Activated T-helper 2 cell treated with anti-CD3 and anti-CD28 coated beads, Interferon-gamma antibody, Interleukin-2, Interleukin-4, amounts not matched to agents 10 μg/mL and 5 μg/mL and 100 μg/mL, durations not matched to agents 14 hours and 24 hours and 36 hours (primary cell): ENCODE measurements at regions of chr3 and their contacts with region 1.

Region 1: DNA sequence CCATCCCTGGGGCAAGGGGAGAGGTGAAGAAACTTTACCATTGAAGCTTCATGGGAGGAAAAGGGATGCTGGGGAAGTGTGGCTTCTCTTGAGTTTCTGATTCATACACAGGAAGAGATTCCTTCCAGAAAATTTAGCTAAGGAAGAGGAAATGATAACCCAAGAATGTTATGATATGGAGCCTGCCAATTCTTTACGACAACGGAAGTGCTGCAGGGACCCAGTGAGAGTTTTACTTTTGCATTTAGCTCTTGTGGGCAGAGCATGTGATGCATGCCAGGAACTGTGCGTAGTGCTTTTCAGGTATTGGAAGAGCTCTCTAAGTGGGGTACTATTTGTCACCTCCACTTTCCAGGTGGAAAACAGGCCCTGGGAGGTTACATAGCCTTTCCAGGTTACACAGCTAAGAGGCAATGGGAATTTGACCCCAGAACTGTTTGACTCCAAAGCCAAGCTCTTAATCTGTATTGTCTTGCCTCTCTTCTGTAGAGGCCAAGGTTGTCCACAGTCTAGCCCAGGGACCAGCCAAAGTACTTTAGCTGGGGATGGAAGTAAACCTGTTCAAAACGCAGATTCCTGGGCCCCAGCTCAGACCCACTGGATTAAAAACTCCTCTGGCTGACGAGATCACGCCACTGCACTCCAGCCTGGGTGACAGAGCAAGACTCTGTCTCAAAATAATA is 23.0 kb downstream of the CMTM7 start:
- DNase-seq: peak; percentile 43
- H3K4me3 Mint-ChIP-seq: peak overlapping the region; percentile 15
- H3K27ac Mint-ChIP-seq: peak overlapping the region; percentile 83
- H3K4me1 Mint-ChIP-seq: peaks cover 59% of the 10 kb centered on the region
- H3K27me3 Mint-ChIP-seq: no peaks in the 10 kb centered on the region

Region 2: DNA sequence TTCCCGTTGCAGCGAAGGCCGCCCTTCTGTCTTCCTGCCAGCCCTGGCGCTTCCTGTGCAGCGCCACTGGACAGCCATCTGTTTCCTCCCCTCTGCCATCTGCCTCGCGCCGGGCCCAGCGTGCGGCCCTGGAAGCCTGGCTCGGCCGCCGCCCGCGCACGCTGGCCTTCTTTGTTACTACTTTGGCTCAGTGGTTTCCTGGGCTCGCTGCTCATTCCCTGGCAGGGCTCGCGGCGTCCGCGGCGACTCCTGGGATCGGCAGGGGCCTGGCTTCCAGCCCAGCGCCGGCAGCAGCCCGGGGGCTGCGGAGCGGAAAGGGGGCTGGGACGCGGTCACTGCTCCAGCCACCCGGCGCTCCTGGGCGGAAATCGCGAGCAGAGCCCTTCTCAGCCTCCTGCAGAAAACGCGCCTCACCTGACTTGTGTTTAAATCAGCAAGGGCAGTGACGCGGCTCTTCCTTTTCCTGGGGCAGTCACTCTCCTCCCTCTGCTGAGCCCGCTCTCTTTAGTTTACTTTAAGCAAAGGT is 13.0 kb before region 1 on chr3:
- intact Hi-C with region 1: loop called (anchors 2 kb)
- DNase-seq: peak; percentile 51
- H3K4me3 Mint-ChIP-seq: peak overlapping the region; percentile 89
- H3K27ac Mint-ChIP-seq: peak overlapping the region; percentile 98
- H3K4me1 Mint-ChIP-seq: peaks cover 53% of the 10 kb centered on the region
- H3K27me3 Mint-ChIP-seq: no peaks in the 10 kb centered on the region